Ascending aorta (tissue), 2 donors: ENCODE measurements at regions of chr17 and their contacts with region 1.

Region 1: DNA sequence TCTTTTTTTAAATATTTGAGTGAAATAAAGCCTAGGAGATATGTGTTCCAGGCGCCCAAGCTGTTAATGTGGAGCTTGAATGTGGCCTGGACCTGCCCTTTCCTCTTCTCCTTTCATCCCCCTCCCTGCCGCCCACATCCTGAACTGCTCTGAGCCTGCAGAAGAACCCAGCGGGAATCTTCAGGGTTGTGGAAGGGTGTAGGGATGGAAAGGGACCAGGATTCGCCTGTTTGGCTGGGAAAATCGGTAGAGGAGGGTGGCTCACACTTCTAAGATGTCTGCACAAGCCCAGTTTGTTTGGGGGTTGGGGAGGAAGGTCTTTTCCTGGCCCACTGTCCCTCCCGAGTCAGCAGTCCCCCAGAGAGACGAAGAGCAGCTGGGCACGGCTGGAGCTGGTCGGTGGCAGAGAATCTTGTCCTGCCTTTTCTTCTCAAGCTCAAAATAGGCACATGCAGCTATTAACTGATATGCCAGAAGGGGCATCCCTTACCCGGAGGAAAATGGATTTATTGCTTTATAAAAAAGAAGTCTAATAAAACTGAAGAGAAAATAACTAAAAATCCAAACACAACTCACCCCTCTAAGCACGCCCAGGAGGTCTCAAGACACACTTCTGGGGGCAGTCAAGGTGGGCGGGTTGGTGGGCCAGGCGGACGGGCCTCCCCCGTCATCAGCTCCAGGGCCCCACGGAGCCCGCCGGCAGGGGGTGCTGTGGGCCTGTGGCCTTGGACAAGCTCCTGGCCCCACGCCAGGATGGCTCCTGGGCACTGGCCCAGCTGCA is 11.5 kb upstream of the PITPNA start:
- DNase-seq: peak in 1 of 2 donors; percentile 94
- H3K4me3 ChIP-seq: no peak overlapping the region
- H3K27ac ChIP-seq: peak overlapping the region; percentile 22 to 26
- H3K4me1 ChIP-seq: peaks cover 17 to 23% of the 10 kb centered on the region in 2 donors
- H3K27me3 ChIP-seq: no peaks in the 10 kb centered on the region
- CTCF ChIP-seq: peak; percentile 95 to 99 (median 98)

Region 2: GRCh38 chr17:1590031-1590748 is 16.1 kb after region 1 on chr17:
- intact Hi-C with region 1: loop called (anchors 1 kb)
- DNase-seq: peak in 1 of 2 donors; percentile 92
- H3K4me3 ChIP-seq: peak overlapping the region; percentile 8 to 38
- H3K27ac ChIP-seq: peak overlapping the region; percentile 84 to 85
- H3K4me1 ChIP-seq: peaks cover 12 to 40% of the 10 kb centered on the region in 2 donors
- H3K27me3 ChIP-seq: no peaks in the 10 kb centered on the region
- CTCF ChIP-seq: no peak

Region 3: GRCh38 chr17:1648963-1649843 is 75.1 kb after region 1 on chr17:
- intact Hi-C with region 1: loop called (anchors 1 kb)
- DNase-seq: peak; percentile 86 to 98
- H3K4me3 ChIP-seq: peak overlapping the region; percentile 74 to 92
- H3K27ac ChIP-seq: peak overlapping the region; percentile 94 to 99
- H3K4me1 ChIP-seq: peaks cover 4 to 22% of the 10 kb centered on the region in 2 donors
- H3K27me3 ChIP-seq: no peaks in the 10 kb centered on the region
- CTCF ChIP-seq: peak in 2 of 3 experiments; percentile 94 to 97

Region 4: GRCh38 chr17:1783834-1784611 is 209.9 kb after region 1 on chr17:
- intact Hi-C with region 1: loop called (anchors 10 kb)
- DNase-seq: peak; percentile 65 to 94
- H3K4me3 ChIP-seq: peak overlapping the region in 1 of 2 donors; percentile 20
- H3K27ac ChIP-seq: peak overlapping the region; percentile 87 to 94
- H3K4me1 ChIP-seq: peaks cover 4 to 51% of the 10 kb centered on the region in 2 donors
- H3K27me3 ChIP-seq: no peaks in the 10 kb centered on the region
- CTCF ChIP-seq: peak; percentile 58 to 63 (median 61)